ENCODE measurements at regions of chr7 and their contacts with region 1.

Region 1: GRCh38 chr7:131107337-131108211 is 220.1 kb upstream of the MKLN1 start:
- DNase-seq: peak in 13 of 14 experiments; percentile 54 to 94 (median 67)
- ATAC-seq: peak; percentile 21
- H3K4me3 ChIP-seq: peak overlapping the region; percentile 97
- H3K4me3 Mint-ChIP-seq: peak overlapping the region; percentile 89
- H3K27ac ChIP-seq: peak overlapping the region; percentile 96 to 98
- H3K27ac Mint-ChIP-seq: peak overlapping the region; percentile 100
- H3K4me1 ChIP-seq: peaks cover 56% of the 10 kb centered on the region
- H3K4me1 Mint-ChIP-seq: peaks cover 72% of the 10 kb centered on the region
- H3K27me3 ChIP-seq: no peaks in the 10 kb centered on the region
- H3K27me3 Mint-ChIP-seq: peaks cover 7% of the 10 kb centered on the region
- CTCF ChIP-seq: peak; percentile 33

Region 2: GRCh38 chr7:131057015-131057793 is 50.4 kb before region 1 on chr7:
- CTCF ChIA-PET with region 1: no interaction called
- POLR2A ChIA-PET with region 1: interaction called, 61 read pairs
- intact Hi-C with region 1: loop called (anchors 10 kb)
- DNase-seq: peak in 3 of 14 experiments; percentile 75 to 88 (median 79)
- ATAC-seq: peak; percentile 54
- H3K4me3 ChIP-seq: peak overlapping the region; percentile 32
- H3K4me3 Mint-ChIP-seq: peak overlapping the region; percentile 88
- H3K27ac ChIP-seq: peak overlapping the region; percentile 72 to 80
- H3K27ac Mint-ChIP-seq: peak overlapping the region; percentile 95
- H3K4me1 ChIP-seq: peaks cover 86% of the 10 kb centered on the region
- H3K4me1 Mint-ChIP-seq: peaks cover 86% of the 10 kb centered on the region
- H3K27me3 ChIP-seq: no peaks in the 10 kb centered on the region
- H3K27me3 Mint-ChIP-seq: no peaks in the 10 kb centered on the region
- CTCF ChIP-seq: no peak

Region 3: DNA sequence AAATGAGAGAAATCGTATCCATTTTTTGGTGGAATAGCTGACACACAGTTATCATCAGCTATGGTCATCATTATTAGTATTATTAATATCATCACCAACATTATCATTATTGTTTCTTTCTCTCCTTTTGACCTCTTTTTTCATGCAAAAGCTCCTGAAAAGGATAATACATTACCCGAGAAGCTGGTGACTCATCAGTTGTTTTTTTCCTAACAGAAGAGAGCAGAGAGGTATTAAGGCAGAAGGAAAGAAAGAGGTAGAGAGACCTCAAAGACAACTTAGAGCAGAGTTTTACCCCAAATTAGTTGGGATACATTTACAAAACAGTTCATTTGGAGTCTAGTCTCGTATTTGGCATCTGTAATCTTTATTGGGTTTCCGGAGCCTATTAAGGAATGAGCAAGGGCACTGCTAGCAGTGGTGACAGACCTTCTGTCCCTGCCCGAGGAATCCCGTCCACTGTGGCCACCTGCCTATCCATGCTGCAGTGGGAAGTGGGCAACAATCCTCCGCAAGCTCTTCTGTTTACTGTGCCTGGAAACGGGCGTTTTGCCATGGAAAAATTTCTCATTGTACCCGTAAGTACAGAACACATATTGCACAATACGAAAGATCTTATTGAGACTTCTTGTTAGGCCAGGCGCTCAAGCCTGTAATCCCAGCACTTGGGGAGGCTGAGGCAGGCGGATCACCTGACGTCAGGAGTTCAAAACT is 50.1 kb after region 1 on chr7:
- CTCF ChIA-PET with region 1: no interaction called
- POLR2A ChIA-PET with region 1: interaction called, 3 read pairs
- intact Hi-C with region 1: loop called in 1 of 2 experiments (anchors 10 kb)
- DNase-seq: no peak
- ATAC-seq: no peak
- H3K4me3 ChIP-seq: no peak overlapping the region
- H3K4me3 Mint-ChIP-seq: no peak overlapping the region
- H3K27ac ChIP-seq: no peak overlapping the region
- H3K27ac Mint-ChIP-seq: no peak overlapping the region
- H3K4me1 ChIP-seq: no peaks in the 10 kb centered on the region
- H3K4me1 Mint-ChIP-seq: no peaks in the 10 kb centered on the region
- H3K27me3 ChIP-seq: no peaks in the 10 kb centered on the region
- H3K27me3 Mint-ChIP-seq: no peaks in the 10 kb centered on the region
- CTCF ChIP-seq: no peak

Region 4: GRCh38 chr7:131231381-131232220 is 124.0 kb after region 1 on chr7:
- CTCF ChIA-PET with region 1: interaction called, 3 read pairs
- POLR2A ChIA-PET with region 1: interaction called, 22 read pairs
- intact Hi-C with region 1: loop called (anchors 1 to 5 kb)
- DNase-seq: peak; percentile 36 to 85 (median 55)
- ATAC-seq: peak; percentile 76
- H3K4me3 ChIP-seq: peak overlapping the region; percentile 38
- H3K4me3 Mint-ChIP-seq: peak overlapping the region; percentile 69
- H3K27ac ChIP-seq: peak overlapping the region; percentile 59 to 62
- H3K27ac Mint-ChIP-seq: peak overlapping the region; percentile 82
- H3K4me1 ChIP-seq: peaks cover 32% of the 10 kb centered on the region
- H3K4me1 Mint-ChIP-seq: peaks cover 37% of the 10 kb centered on the region
- H3K27me3 ChIP-seq: no peaks in the 10 kb centered on the region
- H3K27me3 Mint-ChIP-seq: no peaks in the 10 kb centered on the region
- CTCF ChIP-seq: no peak

Region 5: GRCh38 chr7:131327626-131328376 is 220.2 kb after region 1 on chr7 and contains the start of gene MKLN1:
- CTCF ChIA-PET with region 1: interaction called, 3 read pairs
- POLR2A ChIA-PET with region 1: interaction called, 41 read pairs
- intact Hi-C with region 1: loop called (anchors 1 to 2 kb)
- DNase-seq: peak; percentile 80 to 96 (median 86)
- ATAC-seq: peak; percentile 92
- H3K4me3 ChIP-seq: peak within 1 kb of the TSS; percentile 76
- H3K4me3 Mint-ChIP-seq: peak within 1 kb of the TSS; percentile 93
- H3K27ac ChIP-seq: peak within 1 kb of the TSS; percentile 87 to 92
- H3K27ac Mint-ChIP-seq: peak within 1 kb of the TSS; percentile 97
- H3K4me1 ChIP-seq: peaks cover 27% of the 10 kb centered on the region
- H3K4me1 Mint-ChIP-seq: peaks cover 90% of the 10 kb centered on the region
- H3K27me3 ChIP-seq: no peaks in the 10 kb centered on the region
- H3K27me3 Mint-ChIP-seq: no peaks in the 10 kb centered on the region
- CTCF ChIP-seq: no peak
- total RNA-seq, gene MKLN1: 47.2 to 53.7 TPM

Measured in CD4-positive, alpha-beta T cell (primary cell).